IMR-90 (cell line): ENCODE measurements at regions of chr5 and their contacts with region 1.

Region 1: DNA sequence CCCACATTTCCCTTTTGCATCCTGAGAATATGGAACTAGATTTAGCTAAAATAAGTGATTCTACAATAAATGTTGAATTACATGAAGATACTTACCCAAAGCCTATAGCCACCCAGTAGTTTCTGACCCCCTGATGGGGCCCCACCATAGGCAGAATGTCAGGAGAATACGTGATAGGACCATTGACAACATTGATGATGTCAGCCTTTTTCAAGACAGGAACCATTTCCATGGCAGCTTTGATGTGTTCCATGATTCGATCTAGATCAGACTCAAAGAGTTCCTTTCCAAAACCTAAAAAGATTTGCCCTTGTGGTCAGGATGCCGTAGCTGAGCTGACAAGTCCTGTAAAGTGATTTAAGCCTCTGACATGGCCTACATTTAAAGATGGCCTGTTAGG is 27.3 kb downstream of the DMGDH start:
- DNase-seq: no peak
- ATAC-seq: no peak
- H3K4me3 ChIP-seq: no peak overlapping the region
- H3K27ac ChIP-seq: no peak overlapping the region
- H3K4me1 ChIP-seq: no peaks in the 10 kb centered on the region
- H3K27me3 ChIP-seq: peaks cover 14% of the 10 kb centered on the region; the same call in 1 of the 2 replicates
- CTCF ChIP-seq: no peak
- POLR2A ChIP-seq: no peak
- RAD21 ChIP-seq: no peak

Region 2: GRCh38 chr5:78879516-78879915 is 162.7 kb before region 1 on chr5:
- CTCF ChIA-PET with region 1: no interaction called
- POLR2A ChIA-PET with region 1: no interaction called
- dilution Hi-C with region 1: no loop called
- in situ Hi-C with region 1: no loop called
- intact Hi-C with region 1: no loop called
- DNase-seq: no peak
- ATAC-seq: no peak
- H3K4me3 ChIP-seq: no peak overlapping the region
- H3K27ac ChIP-seq: no peak overlapping the region
- H3K4me1 ChIP-seq: no peaks in the 10 kb centered on the region
- H3K27me3 ChIP-seq: no peaks in the 10 kb centered on the region
- CTCF ChIP-seq: no peak
- POLR2A ChIP-seq: no peak
- RAD21 ChIP-seq: no peak

Region 3: GRCh38 chr5:79109527-79110492 is 67.6 kb after region 1 on chr5:
- CTCF ChIA-PET with region 1: no interaction called
- POLR2A ChIA-PET with region 1: no interaction called
- dilution Hi-C with region 1: no loop called
- in situ Hi-C with region 1: no loop called
- intact Hi-C with region 1: loop called (anchors 5 kb)
- DNase-seq: no peak
- ATAC-seq: no peak
- H3K4me3 ChIP-seq: no peak overlapping the region
- H3K27ac ChIP-seq: no peak overlapping the region
- H3K4me1 ChIP-seq: no peaks in the 10 kb centered on the region
- H3K27me3 ChIP-seq: peaks cover 58% of the 10 kb centered on the region
- CTCF ChIP-seq: 0 out of 2 replicates have a peak, but pooled peaks have one; percentile 19
- POLR2A ChIP-seq: no peak
- RAD21 ChIP-seq: no peak